Right ventricle myocardium inferior (tissue), 1 donor: ENCODE measurements at regions of chr2 and their contacts with region 1.

Region 1: DNA sequence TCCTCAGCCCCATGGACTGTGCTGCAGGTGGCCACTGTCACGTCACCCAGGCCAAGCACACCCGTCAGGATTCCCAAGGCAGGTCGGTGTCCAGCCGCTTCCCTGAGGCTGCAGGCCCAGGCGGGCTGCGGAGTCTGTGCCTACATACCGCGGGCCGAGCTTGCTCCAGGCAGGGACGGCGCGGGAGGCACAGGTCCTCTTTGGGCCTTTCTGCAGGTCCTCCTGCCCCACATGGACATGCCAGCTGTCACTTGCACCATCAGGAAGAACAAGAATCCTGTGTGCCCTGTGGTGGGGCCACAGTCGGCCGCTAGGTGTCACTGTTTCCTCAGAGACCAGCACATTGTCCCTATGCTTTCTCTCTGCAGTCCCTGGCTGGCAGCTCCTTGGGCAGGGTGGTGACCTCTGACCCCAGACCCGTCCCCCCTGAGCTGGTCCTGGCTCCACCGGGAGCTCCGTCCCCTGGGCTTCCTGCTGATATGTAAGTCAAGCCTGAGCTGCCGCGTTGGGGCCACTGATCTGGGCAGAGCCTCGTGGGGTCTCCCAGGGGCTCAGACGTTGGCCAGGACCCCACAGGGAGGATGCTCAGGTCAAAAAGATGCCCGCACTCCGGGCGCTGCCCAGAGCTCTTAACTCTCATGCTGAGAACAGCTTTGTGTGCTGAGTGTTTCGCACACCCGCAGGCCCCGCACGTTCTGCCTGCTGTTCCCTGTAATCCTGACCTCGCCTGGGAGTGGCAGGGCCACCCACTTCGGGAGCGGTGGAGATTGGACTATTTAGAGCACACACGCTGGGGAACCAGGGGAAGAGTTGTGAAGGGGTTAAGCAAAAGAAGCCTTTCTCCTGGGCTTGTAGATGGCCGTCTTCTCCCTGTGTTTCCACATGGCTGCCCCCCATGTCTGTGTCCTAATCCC is 17.3 kb upstream of the AGXT start:
- DNase-seq: peak; percentile 81
- ATAC-seq: peak; percentile 90

Region 2: DNA sequence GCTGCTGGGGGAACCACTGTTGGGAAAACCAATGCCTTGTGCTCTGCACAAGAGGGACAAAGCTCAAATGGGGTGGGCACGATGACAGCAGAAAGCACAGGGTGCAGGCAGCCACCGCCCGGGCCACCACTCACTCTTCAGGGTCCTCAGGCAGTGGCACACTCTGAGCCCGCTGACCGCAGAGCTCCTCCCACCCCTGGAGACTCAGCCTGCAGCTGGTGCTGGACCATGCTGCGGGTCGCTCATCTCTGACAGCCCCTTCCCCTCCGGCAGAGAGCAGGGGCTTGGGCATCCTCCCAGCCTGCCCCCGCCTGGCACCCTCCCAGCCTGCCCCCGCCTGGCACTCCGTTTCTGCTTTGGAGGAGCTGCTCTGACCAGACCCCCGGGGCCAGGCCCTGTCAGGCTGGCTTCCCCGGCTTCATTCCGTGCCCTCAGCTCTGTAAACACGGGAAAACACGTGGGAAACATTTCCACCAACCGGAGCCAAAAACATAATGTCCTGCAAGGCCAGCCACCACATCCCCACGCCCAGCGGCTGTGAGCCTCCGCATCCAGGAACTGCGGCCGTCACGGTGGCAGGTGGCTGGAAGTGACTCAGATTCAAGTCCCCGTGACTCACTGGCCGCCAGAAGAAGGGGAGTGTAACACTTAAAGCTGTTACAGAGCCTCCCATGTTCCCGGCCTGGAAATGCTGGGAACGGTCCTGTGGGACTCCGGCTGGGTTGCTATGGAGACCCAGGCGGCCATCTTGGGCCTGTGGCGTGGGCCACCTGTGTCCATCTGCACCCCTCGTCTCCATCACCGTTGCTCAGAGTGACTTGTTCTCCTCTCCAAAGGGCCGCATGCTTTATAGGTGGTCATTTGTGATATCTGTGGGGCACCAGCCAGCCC is 140.3 kb after region 1 on chr2:
- intact Hi-C with region 1: loop called (anchors 5 kb)
- DNase-seq: peak; percentile 92
- ATAC-seq: peak; percentile 81

Region 3: DNA sequence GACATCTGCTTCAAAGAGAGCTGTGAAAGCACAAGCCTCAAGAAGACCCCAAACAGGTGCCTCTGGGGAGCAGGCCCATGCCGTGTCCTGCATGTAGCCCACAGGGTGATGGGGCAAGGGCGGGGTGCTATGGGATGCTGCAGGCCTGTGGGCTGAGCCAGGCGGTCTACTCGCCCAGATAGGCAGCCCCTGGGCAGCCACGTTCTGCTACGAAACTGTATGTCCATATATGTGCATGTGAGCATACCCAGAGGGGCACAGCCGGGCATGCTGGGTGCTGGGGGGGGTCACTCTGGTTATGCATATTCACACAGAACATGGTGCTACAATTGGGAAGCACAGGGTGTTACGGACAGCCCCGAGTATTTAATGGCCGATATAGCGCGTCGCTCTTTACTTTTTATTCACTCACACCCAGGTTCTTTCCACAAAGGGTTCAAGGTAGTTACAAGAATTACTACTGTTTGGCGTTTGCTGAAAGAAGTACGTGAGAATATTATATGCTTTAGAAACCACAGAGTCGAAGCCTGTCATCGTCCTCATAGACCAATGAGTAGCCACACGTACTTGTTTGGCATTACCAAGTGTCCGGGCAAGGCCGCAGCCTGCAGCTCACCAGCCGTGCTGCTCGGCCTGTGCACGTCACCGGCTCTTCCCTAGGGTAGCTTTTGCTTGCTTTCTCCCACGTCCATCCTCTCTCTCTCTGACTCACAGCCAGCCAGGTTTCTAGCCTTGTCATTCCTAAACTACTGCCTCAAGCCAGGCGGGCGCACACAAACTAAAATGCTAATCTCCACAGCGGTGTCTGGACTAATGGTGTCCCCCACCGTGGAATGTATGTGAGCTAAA is 236.3 kb after region 1 on chr2:
- intact Hi-C with region 1: loop called (anchors 10 kb)
- DNase-seq: no peak
- ATAC-seq: no peak